ENCODE measurements at regions of chr2 and their contacts with region 1.

Region 1: DNA sequence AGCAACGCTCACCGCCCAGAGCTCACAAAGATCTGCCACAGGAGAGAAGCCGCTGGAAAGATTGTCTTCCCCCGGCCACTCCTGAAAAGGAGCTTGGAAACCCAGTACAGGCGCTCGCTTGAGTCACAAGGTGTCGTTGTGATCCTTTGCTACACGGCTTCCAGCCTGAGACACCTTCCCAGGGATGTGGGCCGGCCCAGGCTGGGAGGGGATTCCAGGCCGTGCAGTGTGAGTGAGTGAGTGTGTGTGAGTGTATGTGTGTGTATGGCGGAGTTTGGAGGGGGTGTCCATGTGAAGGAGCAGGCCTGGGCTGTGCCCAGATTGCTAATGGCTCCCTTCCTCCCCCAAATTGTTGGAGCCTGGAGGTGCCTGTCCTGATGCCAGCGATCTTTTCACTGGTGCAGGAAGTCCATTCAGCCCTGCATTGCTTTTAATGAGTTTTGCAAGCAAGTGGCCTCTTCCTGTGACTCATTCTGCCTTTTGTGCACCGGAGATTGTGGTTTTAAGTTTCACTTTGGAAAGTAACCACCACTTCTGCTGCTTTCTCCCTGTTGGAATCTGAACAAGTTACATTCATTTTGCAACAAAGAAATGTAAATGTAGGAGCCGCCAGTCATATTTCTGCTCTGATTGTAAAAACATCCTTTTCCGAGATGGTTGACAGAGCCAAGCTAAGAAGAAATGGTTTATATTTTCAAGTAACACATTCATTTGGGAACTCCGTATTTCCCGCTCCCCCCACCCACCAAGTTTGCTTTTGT is 83.7 kb downstream of the LPIN1 start:
- DNase-seq: peak; percentile 98
- ATAC-seq: peak; percentile 85
- H3K4me3 ChIP-seq: peak overlapping the region; percentile 58
- H3K27ac ChIP-seq: peak overlapping the region; percentile 94
- H3K4me1 ChIP-seq: peaks cover 23% of the 10 kb centered on the region
- H3K27me3 ChIP-seq: no peaks in the 10 kb centered on the region
- CTCF ChIP-seq: peak; percentile 77

Region 2: DNA sequence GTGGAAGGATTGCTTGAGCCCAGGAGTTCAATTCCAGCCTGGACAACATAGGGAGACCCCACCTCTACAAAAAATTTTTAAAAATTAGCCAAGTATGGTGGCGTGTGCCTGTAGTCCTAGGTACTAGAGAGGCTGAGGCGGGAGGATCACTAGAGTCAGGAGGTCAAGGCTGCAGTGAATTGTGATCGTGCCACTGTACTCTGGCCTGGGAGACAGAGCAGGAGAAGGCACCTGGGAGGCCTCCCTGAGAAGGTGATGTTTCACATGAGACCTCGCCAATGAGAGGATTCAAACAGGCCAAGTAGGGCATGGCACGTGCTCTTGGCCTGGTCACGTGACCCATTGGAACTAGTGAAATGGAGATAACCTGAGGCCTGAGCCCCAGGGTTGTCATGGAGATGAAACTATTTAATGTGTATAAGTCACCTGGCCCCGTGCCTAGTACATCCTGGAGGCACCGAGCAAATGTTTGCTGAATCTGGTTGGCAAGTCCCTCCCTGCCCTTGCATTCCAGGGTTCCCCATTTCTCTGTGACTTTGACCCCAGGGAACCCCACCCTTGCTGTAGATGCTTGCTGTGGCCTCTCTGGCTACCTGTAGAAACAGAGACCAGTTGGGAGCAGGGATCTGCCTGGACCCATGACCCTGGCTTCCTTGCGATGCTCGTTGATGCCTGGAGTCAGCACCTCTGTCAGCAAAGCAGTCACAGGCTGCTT is 459.6 kb before region 1 on chr2:
- CTCF ChIA-PET with region 1: no interaction called
- POLR2A ChIA-PET with region 1: no interaction called
- intact Hi-C with region 1: no loop called
- DNase-seq: peak; percentile 94
- ATAC-seq: peak; percentile 30
- H3K4me3 ChIP-seq: no peak overlapping the region
- H3K27ac ChIP-seq: peak overlapping the region; percentile 41
- H3K4me1 ChIP-seq: peaks cover 50% of the 10 kb centered on the region
- H3K27me3 ChIP-seq: no peaks in the 10 kb centered on the region
- CTCF ChIP-seq: no peak

Region 3: DNA sequence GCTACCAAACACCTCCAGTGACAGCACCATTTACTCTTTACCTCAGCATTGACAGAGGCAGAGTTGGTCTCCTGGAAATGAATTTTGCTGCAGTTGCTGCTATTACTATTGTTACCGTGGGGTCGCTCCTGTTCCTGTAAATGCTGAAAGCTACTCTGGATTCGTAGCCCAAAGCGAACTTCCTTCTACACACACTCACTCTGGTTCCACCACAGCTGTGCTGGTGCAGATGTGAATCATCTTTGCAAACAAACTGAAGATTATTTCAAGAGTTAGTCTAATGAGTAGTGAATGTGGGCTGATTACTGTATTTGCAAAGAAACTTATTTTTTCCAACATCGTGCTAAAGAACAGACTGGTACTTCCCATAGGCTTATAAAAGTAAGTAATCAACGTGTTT is 220.3 kb after region 1 on chr2:
- CTCF ChIA-PET with region 1: no interaction called
- POLR2A ChIA-PET with region 1: no interaction called
- intact Hi-C with region 1: loop called (anchors 1 kb)
- DNase-seq: peak; percentile 90
- ATAC-seq: peak; percentile 83
- H3K4me3 ChIP-seq: no peak overlapping the region
- H3K27ac ChIP-seq: peak overlapping the region; percentile 78
- H3K4me1 ChIP-seq: peaks cover 42% of the 10 kb centered on the region
- H3K27me3 ChIP-seq: no peaks in the 10 kb centered on the region
- CTCF ChIP-seq: peak; percentile 76

Region 4: GRCh38 chr2:12282780-12283695 is 452.9 kb after region 1 on chr2:
- CTCF ChIA-PET with region 1: no interaction called
- POLR2A ChIA-PET with region 1: no interaction called
- intact Hi-C with region 1: loop called (anchors 1 kb)
- DNase-seq: no peak
- ATAC-seq: no peak
- H3K4me3 ChIP-seq: no peak overlapping the region
- H3K27ac ChIP-seq: no peak overlapping the region
- H3K4me1 ChIP-seq: peaks cover 36% of the 10 kb centered on the region
- H3K27me3 ChIP-seq: no peaks in the 10 kb centered on the region
- CTCF ChIP-seq: no peak

Region 5: GRCh38 chr2:12430407-12431133 is 600.4 kb after region 1 on chr2:
- CTCF ChIA-PET with region 1: no interaction called
- POLR2A ChIA-PET with region 1: interaction called, 11 read pairs
- intact Hi-C with region 1: no loop called
- DNase-seq: peak; percentile 32
- ATAC-seq: peak; percentile 65
- H3K4me3 ChIP-seq: no peak overlapping the region
- H3K27ac ChIP-seq: 0 out of 2 replicates have a peak overlapping the region, but pooled peaks have one; percentile 1
- H3K4me1 ChIP-seq: peaks cover 20% of the 10 kb centered on the region
- H3K27me3 ChIP-seq: no peaks in the 10 kb centered on the region
- CTCF ChIP-seq: no peak

Region 6: DNA sequence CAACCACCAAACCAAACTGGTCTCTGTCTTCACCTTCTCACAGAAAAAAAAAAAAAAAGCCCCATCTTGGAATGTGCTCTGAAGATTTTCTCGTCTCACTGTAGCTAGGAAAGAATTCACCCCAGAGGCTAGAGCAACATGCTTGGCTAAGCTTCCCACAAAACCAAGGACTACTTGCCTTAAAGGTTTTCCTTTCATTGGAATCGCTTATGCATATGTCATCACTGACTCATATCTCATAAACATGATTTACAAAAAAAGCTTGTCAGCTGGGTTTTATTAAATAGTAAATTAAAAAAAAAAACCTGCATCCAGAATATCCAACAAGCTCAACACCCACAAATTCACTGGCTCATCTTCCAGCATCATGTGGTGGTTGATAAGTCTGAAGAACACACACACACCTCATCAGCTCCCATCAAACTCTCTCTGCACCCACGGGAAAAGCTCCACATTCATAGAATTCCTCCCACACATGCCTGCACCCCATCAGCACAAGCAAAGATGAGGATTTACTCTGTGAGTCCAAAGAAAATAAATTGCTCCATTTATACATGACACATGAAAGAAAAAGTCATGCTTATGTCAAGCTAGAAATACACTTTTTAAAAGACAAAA is 704.6 kb after region 1 on chr2:
- CTCF ChIA-PET with region 1: interaction called, 3 read pairs
- POLR2A ChIA-PET with region 1: interaction called, 6 read pairs
- intact Hi-C with region 1: loop called (anchors 5 kb)
- DNase-seq: peak; percentile 96
- ATAC-seq: peak; percentile 90
- H3K4me3 ChIP-seq: no peak overlapping the region
- H3K27ac ChIP-seq: peak overlapping the region; percentile 81
- H3K4me1 ChIP-seq: peaks cover 33% of the 10 kb centered on the region
- H3K27me3 ChIP-seq: no peaks in the 10 kb centered on the region
- CTCF ChIP-seq: no peak

Region 7: GRCh38 chr2:13006829-13007717 is 1176.9 kb after region 1 on chr2:
- CTCF ChIA-PET with region 1: interaction called, 12 read pairs
- POLR2A ChIA-PET with region 1: no interaction called
- intact Hi-C with region 1: loop called (anchors 1 kb)
- DNase-seq: peak; percentile 87
- ATAC-seq: peak; percentile 95
- H3K4me3 ChIP-seq: peak overlapping the region; percentile 62
- H3K27ac ChIP-seq: no peak overlapping the region
- H3K4me1 ChIP-seq: peaks cover 7% of the 10 kb centered on the region
- H3K27me3 ChIP-seq: no peaks in the 10 kb centered on the region
- CTCF ChIP-seq: peak; percentile 89

Measured in PC-3 (cell line).